Breast epithelium (tissue), 4 donors: ENCODE measurements at regions of chr16 and their contacts with region 1.

Region 1: GRCh38 chr16:23195366-23195978 is 12.9 kb downstream of the SCNN1G start:
- DNase-seq: no peak
- H3K4me3 ChIP-seq: no peak overlapping the region
- H3K27ac ChIP-seq: no peak overlapping the region
- H3K4me1 ChIP-seq: no peaks in the 10 kb centered on the region
- H3K27me3 ChIP-seq: no peaks in the 10 kb centered on the region
- CTCF ChIP-seq: no peak
- POLR2A ChIP-seq: no peak

Region 2: DNA sequence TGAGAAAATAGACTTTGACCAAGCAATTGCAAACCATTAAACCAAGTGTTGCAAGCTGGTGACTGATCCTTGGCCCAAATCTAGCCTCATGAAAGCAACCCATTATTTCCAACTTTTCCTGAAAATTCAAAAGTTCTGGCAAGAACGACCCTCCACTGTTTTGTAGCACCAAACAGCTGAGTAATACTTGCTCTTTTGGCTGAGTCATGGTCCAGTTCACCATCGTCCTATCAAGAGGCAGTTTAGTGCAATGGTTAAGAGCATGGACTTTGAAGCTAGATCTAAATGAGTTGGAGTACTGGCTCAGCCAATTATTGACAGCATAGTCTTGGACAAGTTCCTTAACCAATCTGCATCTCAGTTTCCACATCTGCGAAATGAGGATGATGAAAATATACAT is 18.4 kb after region 1 on chr16:
- intact Hi-C with region 1: loop called (anchors 2 kb)
- DNase-seq: no peak
- H3K4me3 ChIP-seq: no peak overlapping the region
- H3K27ac ChIP-seq: no peak overlapping the region
- H3K4me1 ChIP-seq: no peaks in the 10 kb centered on the region
- H3K27me3 ChIP-seq: no peaks in the 10 kb centered on the region
- CTCF ChIP-seq: no peak
- POLR2A ChIP-seq: no peak